HepG2 (cell line): ENCODE measurements at regions of chr7 and their contacts with region 1.

Region 1: DNA sequence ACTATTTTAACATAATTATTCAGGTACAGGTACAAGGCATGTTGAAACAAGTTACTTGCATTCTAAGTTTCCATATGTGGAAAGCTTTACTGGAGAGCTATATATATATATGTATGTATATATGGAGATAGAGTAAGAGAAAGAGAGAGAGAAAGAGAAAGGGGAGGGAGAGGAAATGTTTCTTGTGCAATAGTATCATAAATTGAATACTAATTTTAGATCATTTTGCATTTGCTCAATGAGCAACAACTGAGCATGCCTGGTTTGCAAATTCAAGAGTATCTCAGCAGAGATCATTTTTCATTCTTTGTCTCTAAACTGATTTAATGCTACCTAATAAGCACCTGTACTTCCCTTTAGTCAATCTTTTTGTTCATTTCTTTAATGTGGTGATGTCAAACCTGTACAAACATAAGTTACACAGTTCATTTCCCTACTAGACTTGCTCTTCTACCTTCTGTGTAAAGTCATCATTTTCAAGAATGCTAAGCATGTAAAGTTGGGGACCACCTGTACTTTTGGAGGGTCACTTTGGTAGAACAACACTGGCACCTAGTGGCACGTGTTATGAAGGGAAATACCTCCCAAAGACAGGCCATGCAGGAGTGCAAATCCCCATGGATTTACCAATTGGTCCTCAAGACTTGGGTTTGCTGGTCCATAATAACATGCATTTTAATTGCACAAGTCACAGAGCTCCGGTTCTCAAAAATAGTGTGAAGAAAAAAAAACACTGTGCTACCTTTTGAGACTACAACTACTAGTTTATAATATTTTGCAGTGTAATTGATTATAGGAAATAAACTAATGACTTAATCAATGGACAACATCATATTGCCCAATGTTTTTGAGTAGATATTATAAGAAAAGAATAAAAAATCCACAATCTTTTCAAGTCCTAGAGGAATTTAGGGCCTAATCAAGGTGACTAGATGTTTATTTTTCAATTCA is 431.2 kb upstream of the IGFBP3 start:
- DNase-seq: peak; percentile 57
- ATAC-seq: peak; percentile 85
- H3K4me3 ChIP-seq: no peak overlapping the region
- H3K27ac ChIP-seq: no peak overlapping the region
- H3K4me1 ChIP-seq: no peaks in the 10 kb centered on the region
- H3K27me3 ChIP-seq: peaks cover 0 to 2% of the 10 kb centered on the region in 2 experiments; a peak in 1 of 5 replicates
- CTCF ChIP-seq: peak; percentile 87
- EP300 ChIP-seq: no peak
- POLR2A ChIP-seq: no peak
- RAD21 ChIP-seq: peak; percentile 84

Region 2: GRCh38 chr7:45872116-45873034 is 479.9 kb before region 1 on chr7:
- CTCF ChIA-PET with region 1: interaction called, 4 read pairs
- POLR2A ChIA-PET with region 1: no interaction called
- in situ Hi-C with region 1: no loop called
- intact Hi-C with region 1: loop called (anchors 1 kb)
- DNase-seq: peak; percentile 57
- ATAC-seq: peak; percentile 97
- H3K4me3 ChIP-seq: peak overlapping the region in 1 of 3 experiments; percentile 33; a peak in 2 of 6 replicates
- H3K27ac ChIP-seq: no peak overlapping the region
- H3K4me1 ChIP-seq: peaks cover 73% of the 10 kb centered on the region
- H3K27me3 ChIP-seq: no peaks in the 10 kb centered on the region
- CTCF ChIP-seq: peak; percentile 89
- EP300 ChIP-seq: no peak
- POLR2A ChIP-seq: no peak
- RAD21 ChIP-seq: peak; percentile 72

Region 3: DNA sequence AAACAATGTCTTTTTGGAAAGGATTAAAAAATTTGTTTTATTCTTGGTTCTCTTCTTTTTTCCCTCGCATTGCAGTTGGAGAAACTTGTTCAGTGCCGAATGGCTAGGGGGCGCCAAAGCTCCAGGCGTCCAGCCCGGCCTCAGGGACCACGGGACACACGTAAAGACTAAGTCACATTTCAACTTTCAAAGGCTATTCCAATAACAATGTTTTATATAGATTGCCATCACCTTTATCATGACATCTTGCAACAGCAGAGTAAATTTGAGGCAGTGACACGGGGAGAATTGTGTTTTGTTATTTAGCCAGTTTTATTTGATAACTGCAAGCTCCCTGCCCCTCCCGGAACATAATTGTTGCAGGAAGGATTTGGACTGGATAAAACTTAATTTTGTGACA is 429.0 kb before region 1 on chr7:
- CTCF ChIA-PET with region 1: interaction called, 52 read pairs
- POLR2A ChIA-PET with region 1: no interaction called
- in situ Hi-C with region 1: loop called (anchors 5 kb)
- intact Hi-C with region 1: loop called (anchors 1 kb)
- DNase-seq: peak; percentile 23
- ATAC-seq: peak; percentile 72
- H3K4me3 ChIP-seq: no peak overlapping the region
- H3K27ac ChIP-seq: no peak overlapping the region
- H3K4me1 ChIP-seq: peaks cover 20% of the 10 kb centered on the region; the same call in 1 of the 2 replicates
- H3K27me3 ChIP-seq: peaks cover 7 to 48% of the 10 kb centered on the region in 2 experiments; a peak in 4 of 5 replicates
- CTCF ChIP-seq: peak; percentile 86
- EP300 ChIP-seq: no peak
- POLR2A ChIP-seq: no peak
- RAD21 ChIP-seq: peak; percentile 73

Region 4: GRCh38 chr7:46131916-46132795 is 220.1 kb before region 1 on chr7:
- CTCF ChIA-PET with region 1: interaction called, 8 read pairs
- POLR2A ChIA-PET with region 1: no interaction called
- in situ Hi-C with region 1: no loop called
- intact Hi-C with region 1: loop called (anchors 5 kb)
- DNase-seq: peak; percentile 43
- ATAC-seq: peak; percentile 98
- H3K4me3 ChIP-seq: no peak overlapping the region
- H3K27ac ChIP-seq: no peak overlapping the region
- H3K4me1 ChIP-seq: peaks cover 7% of the 10 kb centered on the region; the same call in 1 of the 2 replicates
- H3K27me3 ChIP-seq: no peaks in the 10 kb centered on the region; a peak in 1 of 5 replicates
- CTCF ChIP-seq: peak; percentile 60
- EP300 ChIP-seq: no peak
- POLR2A ChIP-seq: no peak
- RAD21 ChIP-seq: 0 out of 2 replicates have a peak, but pooled peaks have one; percentile 25

Region 5: DNA sequence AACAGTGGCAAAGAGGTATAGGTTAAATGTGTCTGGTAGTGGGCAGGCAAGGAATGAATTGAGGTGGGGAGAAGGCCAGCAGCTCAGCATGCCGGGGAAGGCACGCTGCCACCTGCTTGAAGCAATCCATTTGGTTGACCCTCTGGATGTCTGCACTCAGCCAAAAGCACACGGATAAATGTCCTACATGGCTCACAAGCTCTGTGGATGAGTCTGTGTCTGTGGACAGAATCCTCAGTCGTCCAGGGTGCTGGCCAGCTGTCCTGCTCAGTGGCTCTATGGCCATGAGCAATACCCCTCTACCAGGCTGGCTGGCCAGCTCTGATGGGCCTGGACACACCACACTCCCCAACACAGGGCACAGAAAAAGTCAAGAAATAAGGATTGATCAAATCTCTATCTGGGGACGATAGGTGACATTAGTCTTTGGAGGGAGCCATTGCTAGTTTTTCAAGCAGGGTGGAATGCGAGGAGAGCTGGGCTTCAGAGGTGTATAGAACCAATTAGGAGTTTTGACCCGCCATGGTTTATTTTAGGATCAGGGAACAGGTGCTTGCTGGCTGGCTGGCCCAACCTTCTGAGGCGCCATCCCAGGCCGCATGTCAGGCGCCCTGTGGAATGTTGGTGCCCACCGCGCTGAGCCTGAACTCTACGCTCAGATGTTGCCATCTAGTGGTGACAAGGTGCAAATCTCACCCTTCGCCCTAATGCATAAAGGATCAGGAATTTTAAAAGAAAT is 736.2 kb after region 1 on chr7:
- CTCF ChIA-PET with region 1: no interaction called
- POLR2A ChIA-PET with region 1: no interaction called
- in situ Hi-C with region 1: no loop called
- intact Hi-C with region 1: loop called (anchors 5 kb)
- DNase-seq: peak; percentile 46
- ATAC-seq: peak; percentile 99
- H3K4me3 ChIP-seq: no peak overlapping the region
- H3K27ac ChIP-seq: no peak overlapping the region
- H3K4me1 ChIP-seq: no peaks in the 10 kb centered on the region
- H3K27me3 ChIP-seq: 0 out of 5 replicates have a peak, but pooled peaks cover 0 to 7% of the 10 kb centered on the region in 2 experiments
- CTCF ChIP-seq: peak; percentile 87
- EP300 ChIP-seq: no peak
- POLR2A ChIP-seq: no peak
- RAD21 ChIP-seq: peak; percentile 79

Region 6: GRCh38 chr7:47211519-47211973 is 859.3 kb after region 1 on chr7:
- CTCF ChIA-PET with region 1: no interaction called
- POLR2A ChIA-PET with region 1: no interaction called
- in situ Hi-C with region 1: no loop called
- intact Hi-C with region 1: no loop called
- DNase-seq: no peak
- ATAC-seq: no peak
- H3K4me3 ChIP-seq: no peak overlapping the region
- H3K27ac ChIP-seq: no peak overlapping the region
- H3K4me1 ChIP-seq: no peaks in the 10 kb centered on the region
- H3K27me3 ChIP-seq: peaks cover 0 to 12% of the 10 kb centered on the region in 2 experiments; a peak in 2 of 5 replicates
- CTCF ChIP-seq: no peak
- EP300 ChIP-seq: no peak
- POLR2A ChIP-seq: no peak
- RAD21 ChIP-seq: no peak